Posterior vena cava (tissue), 2 donors: ENCODE measurements at regions of chr9 and their contacts with region 1.

Region 1: DNA sequence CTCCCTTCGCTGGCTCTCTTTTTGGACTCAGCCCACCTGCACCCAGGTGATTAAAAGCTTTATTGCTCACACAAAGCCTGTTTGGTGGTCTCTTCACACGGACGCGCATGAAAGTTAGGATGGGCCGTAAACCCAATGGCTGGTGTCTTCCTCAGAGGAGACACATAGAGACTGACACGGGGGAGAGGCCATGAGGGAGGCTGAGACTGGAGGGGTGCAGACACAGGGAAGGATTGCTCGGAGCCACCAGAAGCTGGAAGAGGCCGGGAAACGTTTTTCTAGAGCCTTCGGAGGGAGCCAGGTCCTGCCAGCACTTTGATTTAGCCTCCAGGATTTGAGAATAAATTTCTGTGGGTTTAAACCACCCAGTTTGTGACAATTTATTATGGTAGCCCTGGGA is 274.9 kb downstream of the AGTPBP1 start:
- DNase-seq: no peak

Region 2: GRCh38 chr9:85067792-85068191 is 399.0 kb before region 1 on chr9:
- intact Hi-C with region 1: loop called in 1 of 2 experiments (anchors 5 kb)
- DNase-seq: no peak